ENCODE measurements at regions of chr3 and their contacts with region 1.

Region 1: DNA sequence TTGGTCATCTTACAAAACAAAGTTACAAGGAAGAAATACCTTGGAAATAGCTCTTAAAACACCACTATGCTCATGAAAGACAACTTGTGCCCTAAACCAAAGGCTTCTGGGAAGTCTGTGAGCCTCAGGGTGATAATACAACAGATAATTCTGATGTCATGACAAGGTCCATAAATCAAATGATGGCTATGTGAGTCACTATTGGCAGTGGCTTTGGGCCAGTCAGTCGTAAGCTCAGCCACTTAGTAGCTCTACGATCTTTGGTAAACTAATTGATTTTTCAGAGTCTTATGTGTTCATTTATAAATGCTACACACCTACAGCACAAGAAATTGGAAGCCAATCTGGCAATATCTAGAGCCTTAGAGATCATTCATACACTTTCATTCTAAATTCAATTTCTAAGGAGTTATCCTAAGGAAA is 12.9 kb downstream of the TNIK start:
- DNase-seq: peak in 3 of 4 experiments; percentile 23 to 83 (median 77)
- ATAC-seq: peak; percentile 91
- H3K4me3 ChIP-seq: no peak overlapping the region
- H3K27ac ChIP-seq: peak overlapping the region; percentile 57; the same call in 2 of the 3 replicates
- H3K4me1 ChIP-seq: peaks cover 8 to 38% of the 10 kb centered on the region in 2 experiments; a peak in 4 of 5 replicates
- H3K27me3 ChIP-seq: no peaks in the 10 kb centered on the region
- CTCF ChIP-seq: no peak
- EP300 ChIP-seq: peak; percentile 65
- POLR2A ChIP-seq: no peak
- RAD21 ChIP-seq: no peak

Region 2: DNA sequence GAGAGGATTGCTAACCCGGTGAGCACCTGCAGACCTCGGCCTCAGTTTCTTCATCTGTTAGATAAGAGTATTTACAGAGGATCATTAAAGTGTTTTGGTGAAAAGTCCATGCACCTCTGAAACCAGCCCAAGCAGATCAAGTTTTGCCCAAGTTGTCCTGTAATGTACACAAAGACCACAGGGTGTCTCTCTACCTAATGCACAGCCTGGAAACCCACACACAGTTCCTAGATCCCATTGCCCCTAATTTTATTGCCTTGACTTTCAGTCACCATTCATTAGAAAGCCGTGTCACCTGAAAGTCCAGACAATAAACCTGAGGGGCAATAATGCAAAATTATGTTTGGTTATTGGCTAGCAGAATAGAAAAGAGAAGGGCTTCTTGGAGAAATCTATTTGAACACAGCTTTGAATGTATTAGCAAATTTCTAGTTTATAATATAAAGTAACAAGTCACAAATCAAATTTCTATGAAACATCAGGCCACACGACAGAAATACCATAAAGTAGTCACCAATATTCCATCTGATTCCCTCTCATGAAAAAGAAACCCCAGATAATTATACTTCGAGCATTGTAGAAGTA is 259.6 kb before region 1 on chr3:
- CTCF ChIA-PET with region 1: no interaction called
- POLR2A ChIA-PET with region 1: no interaction called
- in situ Hi-C with region 1: loop called (anchors 10 kb)
- intact Hi-C with region 1: no loop called
- DNase-seq: peak; percentile 32 to 63 (median 46)
- ATAC-seq: peak; percentile 62
- H3K4me3 ChIP-seq: no peak overlapping the region
- H3K27ac ChIP-seq: no peak overlapping the region
- H3K4me1 ChIP-seq: peaks cover 4 to 35% of the 10 kb centered on the region in 2 experiments
- H3K27me3 ChIP-seq: no peaks in the 10 kb centered on the region
- CTCF ChIP-seq: peak; percentile 67 to 71 (median 70)
- EP300 ChIP-seq: no peak
- POLR2A ChIP-seq: no peak
- RAD21 ChIP-seq: peak; percentile 67 to 81

Region 3: DNA sequence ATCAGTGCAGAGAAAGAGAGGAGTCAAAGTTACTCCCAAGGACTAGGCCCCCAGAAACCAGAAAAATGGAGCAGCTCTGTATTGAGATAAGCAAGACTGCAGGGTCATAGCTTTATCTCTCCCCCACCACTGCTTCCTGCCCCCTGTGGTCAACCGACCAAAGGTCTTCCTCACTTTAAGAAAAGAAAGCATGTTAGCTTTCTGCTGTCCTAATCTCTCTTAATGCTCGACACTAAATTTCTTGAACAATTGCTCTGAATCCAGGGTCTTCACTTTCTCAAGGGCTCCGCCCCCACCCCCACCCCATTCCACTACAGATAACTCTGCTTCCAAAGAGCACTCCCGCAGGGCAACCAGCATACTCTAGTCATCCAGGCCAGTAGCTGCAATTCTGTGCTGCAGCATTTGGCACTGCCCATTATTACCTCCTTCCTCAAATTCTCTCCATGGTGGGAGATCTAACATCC is 19.0 kb before region 1 on chr3:
- CTCF ChIA-PET with region 1: no interaction called
- POLR2A ChIA-PET with region 1: interaction called, 9 read pairs
- in situ Hi-C with region 1: no loop called
- intact Hi-C with region 1: loop called (anchors 2 kb)
- DNase-seq: peak; percentile 66 to 90 (median 79)
- ATAC-seq: peak; percentile 97
- H3K4me3 ChIP-seq: no peak overlapping the region
- H3K27ac ChIP-seq: peak overlapping the region; percentile 81
- H3K4me1 ChIP-seq: peaks cover 15 to 40% of the 10 kb centered on the region in 2 experiments
- H3K27me3 ChIP-seq: no peaks in the 10 kb centered on the region
- CTCF ChIP-seq: peak; percentile 13 to 51 (median 50); a peak in 5 of 6 replicates
- EP300 ChIP-seq: peak; percentile 97
- POLR2A ChIP-seq: no peak
- RAD21 ChIP-seq: peak; percentile 30 to 37

Region 4: DNA sequence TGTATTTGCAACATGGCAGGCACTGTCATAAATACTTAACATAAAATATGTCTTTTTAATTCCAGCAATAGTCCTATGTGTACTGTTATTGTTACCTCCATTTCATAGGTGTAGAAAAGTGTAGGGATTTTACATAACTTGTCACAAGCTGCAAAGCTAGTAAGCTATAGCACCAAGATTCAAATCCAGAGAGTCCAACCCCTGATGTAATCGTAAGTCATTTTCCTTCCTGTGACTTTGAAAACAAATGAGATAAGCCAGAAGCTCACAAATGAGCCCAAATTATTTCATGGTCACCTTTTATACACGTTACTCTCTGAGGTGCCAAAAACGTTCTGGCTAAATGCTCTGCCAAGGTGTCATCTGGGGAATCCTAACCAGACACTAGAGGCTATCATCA is 11.0 kb before region 1 on chr3:
- CTCF ChIA-PET with region 1: no interaction called
- POLR2A ChIA-PET with region 1: interaction called, 17 read pairs
- in situ Hi-C with region 1: no loop called
- intact Hi-C with region 1: no loop called
- DNase-seq: no peak
- ATAC-seq: peak; percentile 47
- H3K4me3 ChIP-seq: no peak overlapping the region
- H3K27ac ChIP-seq: no peak overlapping the region
- H3K4me1 ChIP-seq: peaks cover 6 to 40% of the 10 kb centered on the region in 2 experiments
- H3K27me3 ChIP-seq: no peaks in the 10 kb centered on the region
- CTCF ChIP-seq: no peak
- EP300 ChIP-seq: peak; percentile 57
- POLR2A ChIP-seq: no peak
- RAD21 ChIP-seq: no peak

Region 5: DNA sequence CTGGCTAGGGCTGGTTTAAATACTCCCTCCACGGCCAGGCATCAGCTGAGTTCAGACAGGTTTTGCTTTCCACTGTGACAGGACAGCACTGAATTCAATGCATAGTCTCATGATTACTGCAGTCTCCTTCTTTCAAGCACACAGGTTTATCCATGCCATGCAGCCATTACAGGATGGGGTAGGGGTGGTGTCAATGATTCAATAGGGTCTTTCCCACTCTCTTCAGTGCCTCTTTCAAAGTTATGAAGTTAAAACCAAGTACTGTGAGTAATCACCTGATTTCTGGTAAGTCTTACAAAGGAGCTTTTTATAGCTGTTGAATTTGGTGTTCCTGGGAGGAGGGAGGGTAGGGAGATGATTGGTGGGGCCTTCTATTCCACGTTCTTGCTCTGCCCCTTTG is 443.0 kb after region 1 on chr3:
- CTCF ChIA-PET with region 1: no interaction called
- POLR2A ChIA-PET with region 1: no interaction called
- in situ Hi-C with region 1: no loop called
- intact Hi-C with region 1: no loop called
- DNase-seq: no peak
- ATAC-seq: no peak
- H3K4me3 ChIP-seq: no peak overlapping the region
- H3K27ac ChIP-seq: no peak overlapping the region
- H3K4me1 ChIP-seq: no peaks in the 10 kb centered on the region; a peak in 2 of 5 replicates
- H3K27me3 ChIP-seq: no peaks in the 10 kb centered on the region
- CTCF ChIP-seq: no peak
- EP300 ChIP-seq: no peak
- POLR2A ChIP-seq: no peak
- RAD21 ChIP-seq: no peak

Region 6: GRCh38 chr3:171980578-171981270 is 533.4 kb after region 1 on chr3:
- CTCF ChIA-PET with region 1: no interaction called
- POLR2A ChIA-PET with region 1: no interaction called
- in situ Hi-C with region 1: no loop called
- intact Hi-C with region 1: no loop called
- DNase-seq: peak in 2 of 4 experiments; percentile 56 to 68
- ATAC-seq: peak; percentile 87
- H3K4me3 ChIP-seq: no peak overlapping the region
- H3K27ac ChIP-seq: peak overlapping the region; percentile 68; the same call in 2 of the 3 replicates
- H3K4me1 ChIP-seq: peaks cover 0 to 44% of the 10 kb centered on the region in 2 experiments; a peak in 3 of 5 replicates
- H3K27me3 ChIP-seq: no peaks in the 10 kb centered on the region
- CTCF ChIP-seq: no peak
- EP300 ChIP-seq: peak; percentile 54; the same call in 1 of the 2 replicates
- POLR2A ChIP-seq: no peak
- RAD21 ChIP-seq: no peak; a peak in 1 of 4 replicates